SK-N-SH (cell line): ENCODE measurements at regions of chr1 and their contacts with region 1.

Region 1: GRCh38 chr1:151539990-151540981 is at the start of gene TUFT1:
- DNase-seq: peak; percentile 94
- H3K4me3 ChIP-seq: peak within 1 kb of the TSS; percentile 81 to 85
- H3K27ac ChIP-seq: peak within 1 kb of the TSS; percentile 69 to 83
- H3K4me1 ChIP-seq: peaks cover 22 to 38% of the 10 kb centered on the region in 2 experiments; a peak in 3 of 4 replicates
- H3K27me3 ChIP-seq: no peaks in the 10 kb centered on the region
- CTCF ChIP-seq: no peak
- EP300 ChIP-seq: no peak
- RAD21 ChIP-seq: no peak
- polyA plus RNA-seq, gene TUFT1: 20.6 and 27.9 TPM in 2 replicates

Region 2: DNA sequence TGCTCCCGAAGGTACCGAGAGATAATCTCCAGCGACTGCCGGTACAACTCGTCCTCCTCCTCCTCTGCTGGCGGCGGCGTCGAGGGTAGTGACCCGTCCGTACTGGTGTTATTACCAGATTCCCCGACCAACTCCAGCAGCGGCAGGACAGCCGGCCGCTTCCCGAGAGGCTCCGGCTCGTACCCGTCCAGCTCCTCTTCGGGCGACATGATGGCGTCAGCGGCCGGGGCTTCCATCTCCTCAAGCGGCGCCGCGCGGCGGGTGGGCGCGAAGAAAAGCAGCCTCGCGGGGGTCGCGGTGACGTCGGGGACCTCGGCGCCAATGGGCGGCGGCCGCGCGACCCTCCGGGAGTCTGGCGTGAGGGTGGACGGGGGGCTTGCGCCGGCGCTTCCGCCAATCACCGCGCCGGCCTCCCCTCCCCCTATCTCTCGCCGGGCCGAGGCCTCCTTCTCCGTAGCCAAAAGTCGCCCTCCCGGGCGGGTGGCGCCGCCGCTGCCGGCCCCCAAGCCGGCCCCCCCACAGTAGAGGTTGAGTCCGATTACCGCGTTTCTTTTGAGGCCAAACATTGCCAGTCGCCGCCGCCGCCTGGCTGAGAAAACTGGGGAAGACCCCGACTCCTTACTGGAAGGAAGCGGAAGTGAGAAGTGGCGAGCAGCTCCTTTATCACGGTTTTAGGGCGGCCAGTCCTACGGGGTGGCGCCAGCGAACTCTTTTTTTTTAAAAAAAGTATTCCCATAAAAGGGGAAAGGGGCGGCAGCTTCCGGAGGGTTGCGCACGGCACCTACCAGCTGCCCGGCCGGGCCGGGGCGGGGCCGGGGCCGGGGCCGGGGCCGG is 961.1 kb before region 1 on chr1 and contains the start of gene MCL1:
- CTCF ChIA-PET with region 1: no interaction called
- POLR2A ChIA-PET with region 1: no interaction called
- DNase-seq: peak; percentile 94
- H3K4me3 ChIP-seq: peak within 1 kb of the TSS; percentile 95 to 98
- H3K27ac ChIP-seq: peak within 1 kb of the TSS; percentile 97 to 100
- H3K4me1 ChIP-seq: peaks cover 9 to 28% of the 10 kb centered on the region in 2 experiments; a peak in 3 of 4 replicates
- H3K27me3 ChIP-seq: no peaks in the 10 kb centered on the region
- CTCF ChIP-seq: no peak
- EP300 ChIP-seq: 0 out of 4 replicates have a peak, but pooled peaks of 1 of the 2 experiments have one; percentile 56
- RAD21 ChIP-seq: no peak
- polyA plus RNA-seq, gene MCL1: 110 and 131 TPM in 2 replicates

Region 3: GRCh38 chr1:151510957-151511635 is 29.2 kb before region 1 on chr1 and contains the start of gene CGN:
- CTCF ChIA-PET with region 1: interaction called, 5 read pairs
- POLR2A ChIA-PET with region 1: interaction called, 10 read pairs
- DNase-seq: peak; percentile 99
- H3K4me3 ChIP-seq: peak within 1 kb of the TSS; percentile 52 to 78
- H3K27ac ChIP-seq: peak within 1 kb of the TSS; percentile 26 to 78; a peak in 3 of 4 replicates
- H3K4me1 ChIP-seq: peaks cover 4 to 32% of the 10 kb centered on the region in 2 experiments; a peak in 1 of 4 replicates
- H3K27me3 ChIP-seq: peaks cover 15% of the 10 kb centered on the region; the same call in 1 of the 2 replicates
- CTCF ChIP-seq: no peak
- EP300 ChIP-seq: no peak
- RAD21 ChIP-seq: no peak
- polyA plus RNA-seq, gene CGN: 0.36 and 0.44 TPM in 2 replicates